GM10248 (cell line): ENCODE measurements at regions of chr1 and their contacts with region 1.

Region 1: GRCh38 chr1:246351721-246352120 is 155.4 kb downstream of the SMYD3 start:
- DNase-seq: no peak
- CTCF ChIP-seq: no peak

Region 2: GRCh38 chr1:246338546-246338945 is 13.2 kb before region 1 on chr1:
- CTCF ChIA-PET with region 1: interaction called, 11 read pairs
- POLR2A ChIA-PET with region 1: no interaction called
- DNase-seq: no peak
- CTCF ChIP-seq: no peak